ENCODE measurements at regions of chr18 and their contacts with region 1.

Region 1: DNA sequence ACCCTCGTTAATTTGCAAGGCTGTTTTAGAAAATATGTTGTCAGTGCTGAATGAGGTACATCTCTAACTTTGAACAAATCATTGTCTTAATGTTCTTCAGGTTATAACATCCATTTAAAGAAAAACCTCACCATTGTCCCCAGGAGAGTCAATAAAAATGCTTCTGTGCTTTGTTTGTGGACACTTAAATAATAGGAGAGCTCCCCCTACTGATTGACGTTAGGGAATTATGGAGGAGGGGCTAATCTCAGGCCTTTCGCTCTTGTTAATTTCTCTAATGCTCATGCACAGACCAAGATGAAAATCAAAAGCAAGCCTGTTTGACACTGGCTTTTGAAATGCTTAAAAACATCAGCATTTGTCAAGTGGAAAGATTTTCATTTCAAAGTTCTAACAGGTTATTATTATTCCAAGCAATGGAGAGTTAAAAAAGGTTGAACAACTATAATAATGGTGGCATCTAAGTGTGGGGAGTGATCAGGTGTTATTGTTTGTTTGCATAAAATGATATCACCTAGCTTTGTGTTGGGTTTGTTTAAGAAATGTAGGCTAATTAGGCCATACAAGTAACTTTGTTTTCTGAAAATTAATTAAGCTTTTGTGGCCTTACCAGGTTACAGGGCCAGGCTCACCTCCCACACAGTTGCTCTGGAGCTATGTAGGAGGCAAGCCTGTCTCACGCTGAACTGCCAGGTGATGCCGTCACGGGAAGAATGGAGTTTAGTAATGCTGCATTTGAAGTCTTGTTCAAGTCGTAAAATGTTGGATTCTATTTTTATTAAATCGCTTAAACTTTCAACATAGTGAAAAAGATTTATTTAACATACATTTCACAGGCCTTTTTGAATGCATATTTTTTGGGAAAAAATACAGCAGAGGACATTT is 51.7 kb upstream of the SMIM21 start:
- DNase-seq: no peak
- H3K4me3 ChIP-seq: no peak overlapping the region
- H3K27ac ChIP-seq: no peak overlapping the region
- H3K27me3 ChIP-seq: no peaks in the 10 kb centered on the region
- CTCF ChIP-seq: peak; percentile 68

Region 2: DNA sequence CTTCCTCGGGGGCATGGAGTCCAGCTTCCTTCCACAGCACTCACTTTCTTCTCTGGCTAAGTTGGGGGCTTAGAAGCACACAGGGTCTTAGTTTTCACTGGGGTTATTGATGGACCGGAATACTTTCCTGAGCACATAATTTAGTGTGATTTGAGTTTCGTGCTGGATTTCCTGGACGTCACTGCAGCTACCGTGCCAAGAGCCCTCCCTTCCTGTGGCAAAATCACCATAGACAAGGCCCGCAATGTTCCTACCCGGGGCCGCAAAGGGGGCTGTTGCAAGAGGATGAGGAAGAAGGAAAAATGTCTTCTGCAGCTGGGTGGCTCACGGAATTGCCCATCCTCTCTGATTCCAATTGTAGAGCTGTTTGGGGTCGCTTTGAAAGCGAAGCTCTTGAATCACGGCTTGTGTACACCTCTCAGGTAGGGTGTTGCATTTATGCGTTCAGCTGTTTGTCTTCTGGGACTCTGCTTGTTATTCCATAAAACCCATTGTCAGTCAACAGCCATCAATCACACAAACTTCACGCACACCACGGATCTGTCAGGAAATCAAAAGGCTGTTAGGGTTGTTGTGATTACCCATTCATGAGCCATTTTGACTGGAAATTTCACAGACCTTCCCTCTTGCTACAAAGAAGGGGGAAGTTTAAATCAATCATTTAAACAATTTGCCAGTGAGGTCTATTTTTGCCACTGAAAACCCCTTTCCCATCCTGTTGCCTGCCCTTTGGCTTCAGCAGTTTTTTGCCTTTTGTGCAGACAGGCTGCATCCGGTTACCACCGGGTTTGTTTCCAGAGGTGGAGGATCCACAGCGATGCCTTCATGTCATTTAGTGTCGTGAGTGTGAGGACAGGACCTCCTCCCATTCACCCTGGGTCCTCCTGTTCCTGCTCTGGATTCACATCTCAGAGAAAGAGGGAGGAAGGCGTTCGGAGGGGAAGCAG is 87.7 kb before region 1 on chr18:
- CTCF ChIA-PET with region 1: no interaction called
- POLR2A ChIA-PET with region 1: no interaction called
- DNase-seq: no peak
- H3K4me3 ChIP-seq: no peak overlapping the region
- H3K27ac ChIP-seq: no peak overlapping the region
- H3K27me3 ChIP-seq: peaks cover 3% of the 10 kb centered on the region
- CTCF ChIP-seq: no peak

Region 3: GRCh38 chr18:75489493-75490190 is 10.4 kb after region 1 on chr18:
- CTCF ChIA-PET with region 1: interaction called, 24 read pairs
- POLR2A ChIA-PET with region 1: no interaction called
- DNase-seq: peak; percentile 85
- H3K4me3 ChIP-seq: no peak overlapping the region
- H3K27ac ChIP-seq: peak overlapping the region; percentile 97
- H3K27me3 ChIP-seq: no peaks in the 10 kb centered on the region
- CTCF ChIP-seq: no peak

Region 4: GRCh38 chr18:75500545-75500944 is 21.3 kb after region 1 on chr18:
- CTCF ChIA-PET with region 1: interaction called, 18 read pairs
- POLR2A ChIA-PET with region 1: interaction called, 6 read pairs
- DNase-seq: peak; percentile 47
- H3K4me3 ChIP-seq: no peak overlapping the region
- H3K27ac ChIP-seq: no peak overlapping the region
- H3K27me3 ChIP-seq: no peaks in the 10 kb centered on the region
- CTCF ChIP-seq: no peak